ENCODE measurements at regions of chr11 and their contacts with region 1.

Region 1: DNA sequence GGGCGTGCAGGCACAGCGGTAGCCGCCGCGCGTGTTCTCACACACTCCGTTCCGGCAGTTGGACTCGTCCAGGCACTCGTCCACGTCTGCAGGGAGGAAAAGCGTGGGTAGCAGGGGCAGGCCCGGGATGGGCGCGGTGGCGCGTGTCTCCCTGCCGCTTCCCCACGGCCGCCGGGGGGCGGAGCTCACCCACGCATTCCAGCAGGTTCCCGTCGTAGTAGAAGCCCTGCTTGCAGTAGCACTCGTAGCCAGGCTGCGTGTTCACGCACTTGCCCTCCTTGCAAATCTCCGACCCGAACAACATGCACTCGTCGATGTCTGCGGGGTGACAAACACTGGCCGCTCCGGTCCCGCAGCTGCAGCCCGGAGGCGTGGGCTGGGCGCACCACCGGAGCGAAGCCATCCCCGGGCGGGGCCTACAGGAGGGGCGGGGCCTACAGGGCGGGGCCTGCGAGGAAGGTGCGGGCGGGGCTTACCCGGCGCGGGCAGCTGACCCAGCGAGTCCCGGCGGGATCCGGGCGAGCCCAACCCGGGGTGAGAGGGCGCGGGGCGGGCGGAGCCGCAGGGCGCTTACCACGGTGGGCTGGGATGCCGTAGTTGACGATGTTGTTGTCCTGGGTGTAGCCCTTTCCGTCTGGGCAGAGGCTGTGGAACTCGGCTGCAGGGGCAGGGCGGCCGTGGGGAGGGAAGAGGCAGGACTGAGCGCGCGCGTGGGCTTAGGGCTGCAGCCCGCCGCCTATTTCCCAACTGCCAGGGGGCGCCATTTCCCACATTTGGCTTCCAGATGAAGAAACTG is 15.6 kb downstream of the SCYL1 start:
- H3K4me3 Mint-ChIP-seq: peak overlapping the region; percentile 75
- H3K27ac Mint-ChIP-seq: peak overlapping the region; percentile 89
- H3K4me1 Mint-ChIP-seq: peaks cover 62% of the 10 kb centered on the region
- H3K27me3 Mint-ChIP-seq: peaks cover 6% of the 10 kb centered on the region

Region 2: GRCh38 chr11:65588199-65589054 is 47.9 kb after region 1 on chr11:
- intact Hi-C with region 1: loop called (anchors 1 kb)
- H3K4me3 Mint-ChIP-seq: peak overlapping the region; percentile 79
- H3K27ac Mint-ChIP-seq: peak overlapping the region; percentile 95
- H3K4me1 Mint-ChIP-seq: peaks cover 80% of the 10 kb centered on the region
- H3K27me3 Mint-ChIP-seq: no peaks in the 10 kb centered on the region

Region 3: GRCh38 chr11:65599216-65599954 is 58.9 kb after region 1 on chr11:
- intact Hi-C with region 1: no loop called
- H3K4me3 Mint-ChIP-seq: no peak overlapping the region
- H3K27ac Mint-ChIP-seq: no peak overlapping the region
- H3K4me1 Mint-ChIP-seq: peaks cover 52% of the 10 kb centered on the region
- H3K27me3 Mint-ChIP-seq: no peaks in the 10 kb centered on the region

Region 4: DNA sequence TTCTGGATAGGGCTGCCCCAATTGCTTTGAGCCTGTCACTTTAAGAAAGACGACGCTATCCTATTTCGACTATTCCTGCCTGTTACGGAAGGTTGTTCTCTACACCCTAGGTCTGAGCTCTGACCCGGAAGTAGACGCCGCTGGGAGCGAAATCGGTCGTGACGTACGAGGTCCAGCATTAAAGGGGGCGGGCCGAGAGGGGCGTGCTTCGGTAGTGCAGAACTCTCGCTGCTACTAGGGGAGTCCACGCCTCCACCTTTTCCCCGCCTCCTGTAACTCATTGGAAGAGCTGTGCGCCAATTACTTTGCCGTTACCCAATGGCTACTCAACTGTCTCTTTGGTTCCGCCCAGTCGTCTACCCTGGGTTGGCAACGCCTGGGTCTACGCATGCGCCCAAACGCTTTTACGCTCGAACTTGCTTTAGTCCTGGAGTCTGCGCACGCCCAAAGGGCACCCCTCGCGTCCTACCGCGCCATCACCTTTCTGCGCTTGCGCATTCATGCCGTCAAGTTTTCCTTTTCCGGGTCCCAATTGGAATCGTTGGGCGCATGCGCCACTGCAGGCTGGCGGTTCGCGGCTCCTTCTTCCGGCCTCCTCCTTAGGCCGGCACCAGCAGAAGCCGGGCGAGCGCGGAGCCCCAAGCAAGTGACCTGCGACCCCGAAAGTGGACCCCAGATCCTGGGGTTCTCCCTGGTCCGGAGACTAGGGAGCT is 74.9 kb after region 1 on chr11 and contains the start of gene PCNX3:
- intact Hi-C with region 1: loop called (anchors 1 kb)
- H3K4me3 Mint-ChIP-seq: peak within 1 kb of the TSS; percentile 91
- H3K27ac Mint-ChIP-seq: peak within 1 kb of the TSS; percentile 95
- H3K4me1 Mint-ChIP-seq: peaks cover 54% of the 10 kb centered on the region
- H3K27me3 Mint-ChIP-seq: no peaks in the 10 kb centered on the region

Measured in dendritic cell treated with granulocyte-macrophage colony-stimulating factor and Interleukin-4, amounts not matched to agents 40 ng/mL and 50 ng/mL, for 4 days (primary cell).